ENCODE measurements at regions of chr10 and their contacts with region 1.

Region 1: GRCh38 chr10:33330543-33331378 is 3.7 kb downstream of the NRP1 start:
- DNase-seq: peak; percentile 65 to 73 (median 70)
- ATAC-seq: peak; percentile 92
- H3K4me3 ChIP-seq: no peak overlapping the region
- H3K27ac ChIP-seq: no peak overlapping the region
- H3K4me1 ChIP-seq: peaks cover 0 to 11% of the 10 kb centered on the region in 2 experiments; a peak in 2 of 5 replicates
- H3K27me3 ChIP-seq: peaks cover 3 to 19% of the 10 kb centered on the region in 2 experiments; a peak in 3 of 5 replicates
- CTCF ChIP-seq: peak; percentile 65 to 85 (median 83)
- EP300 ChIP-seq: no peak
- POLR2A ChIP-seq: no peak
- RAD21 ChIP-seq: peak; percentile 72 to 77

Region 2: DNA sequence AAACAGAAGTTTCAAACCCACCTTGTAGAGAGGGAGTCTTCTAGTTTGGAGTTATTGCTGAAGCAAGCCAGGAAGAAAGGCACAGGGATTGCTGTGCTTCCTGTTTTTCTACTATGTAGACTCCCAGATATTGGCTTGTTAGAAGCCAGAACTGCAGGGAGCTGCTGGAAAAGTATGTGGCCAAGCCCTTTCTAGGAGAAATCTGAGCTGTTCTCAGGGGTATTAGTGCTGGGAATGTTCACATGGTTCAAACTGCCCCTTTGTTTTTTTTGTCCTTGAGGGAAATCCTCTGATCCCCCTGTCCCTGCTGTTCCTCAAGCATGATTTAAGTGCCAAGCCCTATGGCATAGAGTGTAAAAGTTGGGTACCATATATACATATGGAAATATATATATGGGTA is 700.9 kb before region 1 on chr10:
- CTCF ChIA-PET with region 1: no interaction called
- POLR2A ChIA-PET with region 1: no interaction called
- in situ Hi-C with region 1: no loop called
- intact Hi-C with region 1: no loop called
- DNase-seq: no peak
- ATAC-seq: no peak
- H3K4me3 ChIP-seq: no peak overlapping the region
- H3K27ac ChIP-seq: no peak overlapping the region
- H3K4me1 ChIP-seq: no peaks in the 10 kb centered on the region
- H3K27me3 ChIP-seq: no peaks in the 10 kb centered on the region
- CTCF ChIP-seq: no peak
- EP300 ChIP-seq: no peak
- POLR2A ChIP-seq: no peak
- RAD21 ChIP-seq: no peak

Region 3: DNA sequence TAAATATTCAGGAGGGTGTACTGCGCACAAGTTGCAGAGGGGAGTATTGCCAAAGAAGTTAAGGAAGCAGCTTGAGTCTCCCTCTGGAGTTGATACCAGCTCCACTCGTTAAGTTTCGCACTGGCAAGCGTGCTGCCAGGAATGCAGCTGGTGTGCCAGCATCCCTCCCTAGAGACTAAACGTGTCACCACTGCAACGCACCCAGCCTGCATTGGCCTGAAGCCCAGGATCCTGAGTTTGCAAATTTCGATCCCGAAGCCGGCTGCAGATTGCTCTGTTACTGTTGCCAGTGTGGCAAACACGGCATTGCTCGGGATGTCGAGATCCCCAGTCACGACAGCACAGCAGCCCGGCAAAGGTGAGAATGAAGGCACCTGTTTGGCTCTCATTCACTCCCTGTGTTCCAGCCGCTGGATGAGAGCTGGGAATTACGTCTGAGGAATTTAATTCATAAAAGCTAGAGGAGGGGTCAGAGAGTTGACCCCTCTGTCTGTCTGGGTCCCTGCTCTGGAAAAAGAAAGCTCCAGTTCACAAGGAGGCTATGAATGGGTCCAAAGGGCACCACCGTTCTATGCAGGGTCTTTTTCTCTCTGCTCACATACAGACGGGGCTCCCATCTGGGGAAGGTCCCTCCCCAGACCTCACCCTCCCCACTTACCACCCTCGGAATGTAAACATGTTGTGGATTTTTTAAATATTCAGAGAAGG is 57.3 kb before region 1 on chr10:
- CTCF ChIA-PET with region 1: no interaction called
- POLR2A ChIA-PET with region 1: no interaction called
- in situ Hi-C with region 1: no loop called
- intact Hi-C with region 1: no loop called
- DNase-seq: no peak
- ATAC-seq: no peak
- H3K4me3 ChIP-seq: no peak overlapping the region
- H3K27ac ChIP-seq: no peak overlapping the region
- H3K4me1 ChIP-seq: no peaks in the 10 kb centered on the region
- H3K27me3 ChIP-seq: peaks cover 0 to 6% of the 10 kb centered on the region in 2 experiments; a peak in 2 of 5 replicates
- CTCF ChIP-seq: no peak
- EP300 ChIP-seq: no peak
- POLR2A ChIP-seq: no peak
- RAD21 ChIP-seq: no peak

Region 4: GRCh38 chr10:33306701-33307512 is 23.9 kb before region 1 on chr10:
- CTCF ChIA-PET with region 1: no interaction called
- POLR2A ChIA-PET with region 1: no interaction called
- in situ Hi-C with region 1: no loop called
- intact Hi-C with region 1: no loop called
- DNase-seq: no peak
- ATAC-seq: no peak
- H3K4me3 ChIP-seq: no peak overlapping the region
- H3K27ac ChIP-seq: no peak overlapping the region
- H3K4me1 ChIP-seq: no peaks in the 10 kb centered on the region
- H3K27me3 ChIP-seq: peaks cover 0 to 6% of the 10 kb centered on the region in 2 experiments; a peak in 2 of 5 replicates
- CTCF ChIP-seq: no peak
- EP300 ChIP-seq: no peak
- POLR2A ChIP-seq: no peak
- RAD21 ChIP-seq: no peak

Region 5: GRCh38 chr10:34522546-34522945 is 1191.8 kb after region 1 on chr10:
- CTCF ChIA-PET with region 1: no interaction called
- POLR2A ChIA-PET with region 1: no interaction called
- in situ Hi-C with region 1: loop called (anchors 25 kb)
- intact Hi-C with region 1: no loop called
- DNase-seq: peak in 2 of 4 experiments; percentile 16 to 31
- ATAC-seq: peak; percentile 69
- H3K4me3 ChIP-seq: no peak overlapping the region
- H3K27ac ChIP-seq: no peak overlapping the region
- H3K4me1 ChIP-seq: no peaks in the 10 kb centered on the region
- H3K27me3 ChIP-seq: no peaks in the 10 kb centered on the region
- CTCF ChIP-seq: peak; percentile 38 to 65 (median 45); a peak in 5 of 6 replicates
- EP300 ChIP-seq: no peak
- POLR2A ChIP-seq: no peak
- RAD21 ChIP-seq: peak; percentile 44 to 46

Measured in K562 (cell line).